Caco-2 (cell line): ENCODE measurements at regions of chr2 and their contacts with region 1.

Region 1: GRCh38 chr2:240902615-240903041 is 3.5 kb upstream of the CROCC2 start:
- DNase-seq: peak; percentile 74 to 84
- H3K4me3 ChIP-seq: no peak overlapping the region
- H3K4me3 Mint-ChIP-seq: no peak overlapping the region
- H3K27ac Mint-ChIP-seq: peak overlapping the region; percentile 63
- H3K4me1 ChIP-seq: peaks cover 25% of the 10 kb centered on the region
- H3K4me1 Mint-ChIP-seq: peaks cover 21% of the 10 kb centered on the region
- H3K27me3 ChIP-seq: no peaks in the 10 kb centered on the region
- H3K27me3 Mint-ChIP-seq: no peaks in the 10 kb centered on the region
- CTCF ChIP-seq: no peak

Region 2: DNA sequence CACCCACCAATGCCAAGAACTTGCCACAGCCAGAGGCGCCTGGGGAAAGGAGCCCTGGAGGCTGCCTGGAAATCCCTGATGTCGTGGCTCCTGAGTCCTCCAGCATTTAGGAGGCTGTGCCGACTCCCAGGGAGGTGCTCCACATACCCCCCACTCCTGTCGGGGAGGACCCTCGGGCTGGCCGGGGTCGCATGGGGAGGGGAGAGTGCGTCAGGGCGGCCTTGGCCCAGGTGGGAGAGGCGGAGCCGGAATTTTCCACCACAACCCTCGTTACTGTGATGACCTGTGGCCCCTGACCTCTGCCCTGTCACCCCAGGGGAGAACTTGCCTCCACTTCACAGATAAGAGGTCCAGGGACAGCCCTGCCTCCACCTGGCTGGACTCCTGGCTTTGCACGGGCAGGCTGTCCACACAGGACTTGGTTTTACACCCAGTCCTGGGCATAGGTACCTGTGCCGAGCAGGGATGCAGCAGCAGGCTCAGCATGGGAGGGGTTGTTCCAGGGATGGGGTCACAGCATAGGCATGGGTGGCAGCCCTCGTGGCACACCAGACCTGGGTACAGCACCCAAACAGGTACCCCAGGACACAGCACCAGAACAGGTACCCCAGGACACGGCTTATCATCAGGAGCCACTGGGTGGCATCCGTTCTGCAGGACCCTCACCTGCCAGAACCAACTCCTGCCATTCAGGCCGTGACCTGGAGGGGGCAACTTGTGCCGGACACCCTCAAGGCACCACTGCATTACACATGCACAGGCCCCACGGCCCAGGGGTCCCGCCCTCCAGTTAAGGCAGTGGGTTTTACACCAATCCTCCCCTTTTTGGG is 46.3 kb before region 1 on chr2:
- CTCF ChIA-PET with region 1: interaction called, 12 read pairs
- POLR2A ChIA-PET with region 1: interaction called, 8 read pairs
- intact Hi-C with region 1: loop called (anchors 2 kb)
- DNase-seq: peak in 1 of 2 experiments; percentile 34
- H3K4me3 ChIP-seq: no peak overlapping the region
- H3K4me3 Mint-ChIP-seq: no peak overlapping the region
- H3K27ac Mint-ChIP-seq: no peak overlapping the region
- H3K4me1 ChIP-seq: peaks cover 17% of the 10 kb centered on the region
- H3K4me1 Mint-ChIP-seq: peaks cover 9% of the 10 kb centered on the region
- H3K27me3 ChIP-seq: no peaks in the 10 kb centered on the region
- H3K27me3 Mint-ChIP-seq: no peaks in the 10 kb centered on the region
- CTCF ChIP-seq: peak in 1 of 2 experiments; percentile 29